ENCODE measurements at regions of chr12 and their contacts with region 1.

Region 1: DNA sequence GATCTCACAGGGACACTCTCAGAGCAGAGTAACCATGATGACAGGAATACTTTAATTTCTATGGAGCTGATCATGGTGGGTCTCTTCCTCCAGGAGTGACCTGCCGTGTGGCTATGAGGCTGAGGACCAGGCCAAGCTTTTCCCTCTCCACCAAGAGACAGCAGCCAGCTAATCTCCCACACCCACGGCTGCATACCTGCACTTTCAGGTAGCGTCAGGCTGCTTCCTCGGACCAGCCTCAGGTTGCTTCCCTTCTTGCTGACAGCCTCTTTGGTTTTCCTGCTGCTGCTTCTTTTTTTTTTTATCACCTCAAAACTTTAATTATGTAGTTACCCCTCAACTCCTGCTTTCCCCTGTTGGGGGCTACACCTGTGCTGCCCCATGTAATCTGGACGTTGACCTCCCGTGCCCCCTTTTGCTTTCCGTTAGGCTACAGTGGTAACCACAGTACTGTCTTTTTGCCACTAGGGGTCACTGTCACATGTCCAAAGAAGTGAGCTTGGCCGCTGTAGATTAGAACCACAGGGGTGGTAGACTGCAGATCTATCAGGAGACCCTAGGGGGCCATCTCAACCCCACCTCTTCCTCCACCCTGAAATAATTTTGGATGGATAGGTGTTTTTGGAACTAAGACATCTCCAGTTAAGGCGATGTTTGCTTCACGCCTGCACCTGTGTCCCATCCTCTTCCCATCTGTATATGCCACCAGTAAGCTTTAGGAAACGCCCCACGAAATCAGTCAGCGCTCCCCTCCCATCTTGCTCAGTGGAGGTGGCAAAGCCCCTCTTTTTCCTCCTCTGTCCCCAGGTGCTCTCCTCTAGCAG is 7.8 kb upstream of the PIP4K2C start:
- DNase-seq: peak in 7 of 10 donors; percentile 48 to 80 (median 66)
- H3K4me3 ChIP-seq: no peak overlapping the region
- H3K27ac ChIP-seq: peak overlapping the region in 14 of 59 donors; percentile 4 to 62 (median 30)
- H3K27me3 ChIP-seq: no peaks in the 10 kb centered on the region
- CTCF ChIP-seq: peak in 55 of 56 donors; percentile 90 to 99 (median 96)

Region 2: GRCh38 chr12:57372233-57372632 is 211.0 kb before region 1 on chr12:
- intact Hi-C with region 1: no loop called
- DNase-seq: peak in 1 of 10 donors; percentile 14
- H3K4me3 ChIP-seq: no peak overlapping the region
- H3K27ac ChIP-seq: peak overlapping the region in 34 of 59 donors; percentile 0 to 62 (median 32)
- H3K27me3 ChIP-seq: no peaks in the 10 kb centered on the region
- CTCF ChIP-seq: no peak

Region 3: DNA sequence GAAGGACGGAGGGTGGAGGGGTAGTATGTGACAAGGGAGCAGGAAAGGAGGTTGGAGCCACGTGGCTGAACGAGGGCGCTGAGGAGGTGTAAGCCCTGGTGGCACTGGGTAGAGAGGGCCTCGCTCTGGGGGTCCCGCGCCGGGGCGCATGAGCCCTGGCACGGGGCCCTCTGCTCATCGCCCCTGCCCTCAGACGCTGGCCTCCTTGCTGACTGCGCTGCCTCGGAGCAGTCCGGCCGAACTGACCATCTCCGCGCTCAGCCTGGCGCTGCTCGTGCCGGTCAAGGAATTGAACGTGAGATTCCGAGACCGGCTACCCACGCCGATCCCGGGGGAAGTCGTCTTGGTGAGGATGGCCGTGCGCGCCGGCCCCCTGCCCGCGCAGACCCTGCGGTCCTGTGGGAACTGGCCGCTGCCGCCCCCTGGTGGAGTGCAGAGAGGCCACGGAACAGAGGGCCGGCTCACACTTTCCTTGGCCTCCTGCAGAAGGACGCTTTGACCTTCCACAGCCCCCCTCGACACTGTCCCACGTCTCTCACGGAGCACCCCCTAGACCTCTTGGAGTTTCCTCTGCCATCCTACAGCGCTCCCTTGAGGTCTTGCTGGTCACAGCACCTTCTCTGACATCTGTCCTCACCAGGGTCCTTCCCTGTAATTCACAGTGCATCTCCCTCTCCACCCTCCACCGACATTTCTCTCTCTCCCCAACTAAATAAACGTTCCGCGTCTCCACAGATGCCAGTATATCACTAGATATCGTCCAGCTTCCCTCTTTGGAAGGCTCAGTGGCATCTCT is 38.5 kb after region 1 on chr12:
- intact Hi-C with region 1: loop called (anchors 1 to 2 kb)
- DNase-seq: peak in 8 of 10 donors; percentile 44 to 74 (median 66)
- H3K4me3 ChIP-seq: peak overlapping the region; percentile 30 to 76 (median 56)
- H3K27ac ChIP-seq: peak overlapping the region in 3 of 59 donors; percentile 2 to 39 (median 33)
- H3K27me3 ChIP-seq: peaks cover 0 to 31% (median 0%) of the 10 kb centered on the region in 45 donors
- CTCF ChIP-seq: peak; percentile 47 to 97 (median 90)

Region 4: GRCh38 chr12:57627501-57628279 is 44.5 kb after region 1 on chr12:
- intact Hi-C with region 1: loop called (anchors 2 kb)
- DNase-seq: no peak
- H3K4me3 ChIP-seq: peak overlapping the region in 13 of 59 donors; percentile 3 to 40 (median 15)
- H3K27ac ChIP-seq: peak overlapping the region in 14 of 59 donors; percentile 6 to 73 (median 30)
- H3K27me3 ChIP-seq: peaks cover 0 to 14% (median 0%) of the 10 kb centered on the region in 45 donors
- CTCF ChIP-seq: peak in 4 of 56 donors; percentile 11 to 20 (median 19)

Region 5: GRCh38 chr12:57632694-57633477 is 49.7 kb after region 1 on chr12 and contains the start of gene B4GALNT1:
- intact Hi-C with region 1: loop called (anchors 2 kb)
- DNase-seq: peak in 6 of 10 donors; percentile 44 to 86 (median 70)
- H3K4me3 ChIP-seq: peak within 1 kb of the TSS; percentile 41 to 84 (median 71)
- H3K27ac ChIP-seq: peak within 1 kb of the TSS in 57 of 59 donors; percentile 34 to 92 (median 82)
- H3K27me3 ChIP-seq: peaks cover 0 to 10% (median 0%) of the 10 kb centered on the region in 45 donors
- CTCF ChIP-seq: peak; percentile 47 to 89 (median 76)
- total RNA-seq, gene B4GALNT1: 23.9 to 123 (median 85.1) TPM

Region 6: GRCh38 chr12:57693659-57694458 is 110.6 kb after region 1 on chr12 and contains the start of gene OS9:
- intact Hi-C with region 1: loop called in 1 of 2 experiments (anchors 5 kb)
- DNase-seq: peak; percentile 86 to 99 (median 98)
- H3K4me3 ChIP-seq: peak within 1 kb of the TSS; percentile 57 to 100 (median 92)
- H3K27ac ChIP-seq: peak within 1 kb of the TSS in 54 of 59 donors; percentile 16 to 92 (median 74)
- H3K27me3 ChIP-seq: no peaks in the 10 kb centered on the region
- CTCF ChIP-seq: peak; percentile 47 to 93 (median 80)
- total RNA-seq, gene OS9: 111 to 171 (median 140) TPM

Region 7: GRCh38 chr12:57730336-57731067 is 147.3 kb after region 1 on chr12:
- intact Hi-C with region 1: loop called (anchors 5 to 10 kb)
- DNase-seq: peak in 1 of 10 donors; percentile 18
- H3K4me3 ChIP-seq: no peak overlapping the region
- H3K27ac ChIP-seq: peak overlapping the region in 2 of 59 donors; percentile 24 to 29
- H3K27me3 ChIP-seq: peaks cover 0 to 24% (median 0%) of the 10 kb centered on the region in 45 donors
- CTCF ChIP-seq: no peak

Region 8: DNA sequence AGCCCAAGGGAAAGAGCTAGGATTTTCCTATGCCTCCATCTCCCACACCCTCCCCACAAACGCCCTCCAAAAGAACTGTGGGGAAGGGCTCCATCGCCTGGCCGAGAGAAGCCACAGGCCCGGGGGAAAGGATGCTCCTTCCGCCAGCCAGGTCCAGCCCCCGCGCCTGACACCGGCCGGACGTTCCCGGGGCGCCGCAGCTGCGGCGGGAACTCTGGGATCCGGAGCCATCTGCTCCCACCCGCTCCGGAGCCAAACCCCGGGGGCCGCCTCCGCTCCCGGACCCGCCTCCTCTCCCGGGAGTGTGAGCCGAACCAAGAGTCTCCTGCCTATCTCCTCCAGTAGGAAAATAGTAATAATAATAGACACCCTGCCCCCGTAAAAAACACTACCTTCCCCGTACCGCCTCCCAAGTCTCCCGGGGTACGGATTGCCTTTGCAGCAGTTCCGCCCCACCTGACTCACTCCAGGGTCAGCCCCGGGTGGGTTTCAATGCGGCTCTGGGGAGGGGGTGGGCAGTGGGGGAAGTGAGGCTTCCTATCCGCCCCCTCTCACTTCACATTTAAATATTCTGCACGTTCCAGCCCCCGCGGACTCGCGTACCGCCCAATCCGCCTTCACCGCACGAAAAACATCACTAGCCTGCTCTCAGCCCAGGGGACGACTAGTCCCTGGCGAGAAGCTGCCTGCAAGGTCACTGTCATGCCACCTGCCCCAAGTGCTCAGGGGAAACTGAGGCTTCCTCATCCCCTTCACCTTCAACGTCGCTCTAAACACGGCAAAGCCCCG is 152.9 kb after region 1 on chr12:
- intact Hi-C with region 1: loop called (anchors 5 to 10 kb)
- DNase-seq: peak in 5 of 10 donors; percentile 56 to 93 (median 69)
- H3K4me3 ChIP-seq: peak overlapping the region; percentile 21 to 77 (median 64)
- H3K27ac ChIP-seq: peak overlapping the region in 53 of 59 donors; percentile 32 to 94 (median 79)
- H3K27me3 ChIP-seq: peaks cover 0 to 60% (median 10%) of the 10 kb centered on the region in 45 donors
- CTCF ChIP-seq: peak in 47 of 56 donors; percentile 13 to 61 (median 31)